Psoas muscle (tissue), 8 donors: ENCODE measurements at regions of chr3 and their contacts with region 1.

Region 1: GRCh38 chr3:38117748-38118420 is 19.0 kb downstream of the ACAA1 start:
- DNase-seq: peak; percentile 61 to 68
- ATAC-seq: peak; percentile 59 to 84 (median 76)
- H3K4me3 ChIP-seq: no peak overlapping the region
- H3K27ac ChIP-seq: no peak overlapping the region
- H3K4me1 ChIP-seq: no peaks in the 10 kb centered on the region
- H3K27me3 ChIP-seq: no peaks in the 10 kb centered on the region
- CTCF ChIP-seq: peak; percentile 54

Region 2: DNA sequence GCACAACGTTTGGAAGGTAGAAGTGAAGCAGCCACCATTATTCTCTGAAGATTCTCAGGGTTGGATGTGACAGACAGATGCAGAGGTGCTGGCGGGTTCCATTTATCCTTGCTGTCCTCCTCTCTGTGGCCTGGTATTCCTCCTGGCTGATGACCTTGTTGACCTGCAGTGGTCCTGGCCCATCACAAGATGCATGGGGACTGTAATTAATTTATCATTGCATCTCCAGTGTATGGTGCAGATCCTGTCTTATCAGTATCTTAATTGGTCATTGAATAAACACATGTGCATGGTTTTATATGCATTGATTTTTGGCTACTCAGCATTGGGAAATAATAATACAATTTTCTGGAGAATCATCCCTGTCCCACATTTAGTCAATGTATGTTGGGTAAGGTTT is 684.1 kb before region 1 on chr3:
- intact Hi-C with region 1: loop called in 1 of 2 experiments (anchors 5 kb)
- DNase-seq: no peak
- ATAC-seq: no peak
- H3K4me3 ChIP-seq: no peak overlapping the region
- H3K27ac ChIP-seq: no peak overlapping the region
- H3K4me1 ChIP-seq: no peaks in the 10 kb centered on the region
- H3K27me3 ChIP-seq: no peaks in the 10 kb centered on the region
- CTCF ChIP-seq: no peak

Region 3: DNA sequence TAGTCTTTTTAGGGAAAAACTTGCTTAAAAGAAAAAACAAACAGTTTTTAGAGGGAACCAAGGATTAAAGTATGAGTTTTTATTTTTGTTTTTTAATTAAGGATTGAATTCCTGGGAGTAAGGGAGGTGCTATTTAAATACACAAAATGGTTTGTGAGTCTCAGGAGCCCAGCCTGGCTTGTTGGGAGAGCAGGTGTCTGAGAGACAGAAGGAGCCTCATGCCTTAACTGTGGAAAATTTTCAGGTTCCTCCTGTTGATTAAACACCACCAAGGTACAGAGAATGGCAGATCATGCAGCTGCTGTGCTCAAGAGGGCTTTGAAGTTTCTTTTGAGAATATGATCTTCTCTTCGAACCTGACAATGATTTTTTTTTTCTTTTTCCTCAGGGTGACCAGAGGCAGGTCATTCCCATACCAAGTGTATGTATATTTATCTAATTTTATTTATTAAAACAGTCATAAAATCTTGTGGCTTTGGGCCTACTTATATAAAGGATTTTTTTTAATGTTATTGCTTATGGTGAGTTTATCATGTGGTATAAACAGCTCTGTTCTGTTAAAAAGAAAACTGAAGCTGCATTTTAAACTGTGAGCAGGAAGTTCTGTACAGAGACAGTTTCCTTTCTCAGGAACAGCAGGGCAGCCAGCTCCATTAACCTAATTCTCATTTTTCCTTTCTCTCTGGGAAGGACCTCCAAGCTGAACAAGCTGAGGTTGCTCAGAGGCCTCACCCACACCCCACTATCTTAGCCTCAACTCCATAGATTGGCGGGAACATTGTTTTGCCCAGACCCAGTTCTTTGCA is 161.0 kb before region 1 on chr3:
- intact Hi-C with region 1: no loop called
- DNase-seq: no peak
- ATAC-seq: no peak
- H3K4me3 ChIP-seq: no peak overlapping the region
- H3K27ac ChIP-seq: peak overlapping the region; percentile 27
- H3K4me1 ChIP-seq: no peaks in the 10 kb centered on the region
- H3K27me3 ChIP-seq: no peaks in the 10 kb centered on the region
- CTCF ChIP-seq: no peak